ENCODE measurements at regions of chr9 and their contacts with region 1.

Region 1: DNA sequence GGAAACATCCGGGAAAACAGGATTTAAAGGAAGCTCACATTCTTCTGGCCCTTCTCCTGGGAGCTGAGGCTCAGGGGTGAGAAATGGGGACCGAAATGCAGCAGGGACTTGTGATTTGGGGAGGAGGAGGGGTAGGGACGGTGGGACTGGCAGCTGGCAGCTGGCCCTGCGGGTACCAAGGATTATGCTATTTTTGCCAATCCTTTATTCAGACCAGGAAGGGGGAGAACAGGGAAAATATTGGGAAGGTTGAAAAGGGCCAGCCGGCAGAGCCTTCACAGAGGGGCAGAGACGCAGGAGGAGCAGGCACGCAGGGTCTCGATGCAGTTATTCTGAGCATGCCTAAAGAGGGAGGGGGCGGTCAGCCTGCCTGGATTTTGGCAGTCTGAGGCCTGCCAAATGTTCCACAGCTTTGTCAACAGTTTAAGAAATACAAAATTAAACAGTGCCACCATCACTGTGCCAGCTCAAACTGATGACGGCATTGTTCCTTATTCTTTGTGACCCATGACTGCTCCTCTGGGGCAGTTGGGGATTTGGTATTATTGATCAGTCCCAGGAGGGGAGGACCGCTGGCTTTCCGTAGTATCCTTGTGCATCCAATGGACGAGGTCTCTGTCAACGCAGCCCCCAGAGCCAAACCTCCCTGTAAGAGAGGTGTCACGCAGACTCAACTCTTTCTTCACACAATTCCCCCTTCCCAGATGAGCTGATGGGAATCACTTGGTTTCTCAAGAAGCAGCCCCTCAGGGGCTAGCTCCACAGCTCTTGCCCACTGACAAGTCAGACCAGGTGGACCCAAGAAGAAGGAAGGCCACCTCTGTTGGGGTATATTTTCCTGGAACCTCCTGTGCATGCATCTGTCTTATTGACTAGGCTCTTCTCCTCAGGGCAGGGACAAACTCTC is 553.3 kb downstream of the BNC2 start:
- DNase-seq: no peak
- ATAC-seq: no peak
- H3K4me3 ChIP-seq: no peak overlapping the region
- H3K27ac ChIP-seq: no peak overlapping the region
- H3K4me1 ChIP-seq: no peaks in the 10 kb centered on the region
- H3K27me3 ChIP-seq: no peaks in the 10 kb centered on the region
- CTCF ChIP-seq: no peak

Region 2: DNA sequence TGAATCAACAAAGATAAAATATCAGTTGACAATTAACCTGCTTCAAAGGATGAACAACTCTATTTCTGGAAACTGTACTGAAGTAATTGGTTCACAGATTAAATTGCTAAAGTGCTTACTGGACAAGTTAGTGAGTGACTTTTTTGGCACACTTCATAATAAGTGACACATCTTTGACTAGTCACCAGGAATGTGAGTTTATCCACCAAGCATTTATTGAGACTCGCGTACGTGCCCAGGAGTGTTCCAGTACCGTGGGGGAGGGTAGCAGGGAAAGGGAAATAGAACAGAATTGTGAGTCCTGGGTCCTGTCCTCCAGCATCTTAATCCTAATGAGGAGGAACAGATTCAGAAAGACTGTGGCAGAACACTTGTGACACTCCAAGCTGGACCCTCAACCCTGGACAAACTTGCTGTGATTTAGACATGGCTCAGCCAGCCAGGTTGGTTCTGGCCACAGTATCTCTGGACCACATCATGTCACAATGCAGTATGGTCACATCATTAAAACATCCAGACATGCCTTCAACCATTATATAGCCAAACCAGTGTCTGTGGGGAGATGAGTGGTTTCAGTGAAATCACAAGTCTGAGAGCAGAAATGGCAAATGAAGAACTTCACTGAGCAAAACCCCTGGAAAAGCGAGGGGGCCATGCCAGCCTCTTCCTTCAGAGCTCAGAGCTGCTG is 69.8 kb before region 1 on chr9:
- CTCF ChIA-PET with region 1: no interaction called
- POLR2A ChIA-PET with region 1: no interaction called
- in situ Hi-C with region 1: no loop called
- intact Hi-C with region 1: no loop called
- DNase-seq: no peak
- ATAC-seq: no peak
- H3K4me3 ChIP-seq: no peak overlapping the region
- H3K27ac ChIP-seq: no peak overlapping the region
- H3K4me1 ChIP-seq: no peaks in the 10 kb centered on the region
- H3K27me3 ChIP-seq: no peaks in the 10 kb centered on the region
- CTCF ChIP-seq: no peak

Region 3: GRCh38 chr9:16615451-16615850 is 298.3 kb after region 1 on chr9:
- CTCF ChIA-PET with region 1: no interaction called
- POLR2A ChIA-PET with region 1: interaction called, 10 read pairs
- in situ Hi-C with region 1: no loop called
- intact Hi-C with region 1: no loop called
- DNase-seq: no peak
- ATAC-seq: no peak
- H3K4me3 ChIP-seq: no peak overlapping the region
- H3K27ac ChIP-seq: no peak overlapping the region
- H3K4me1 ChIP-seq: no peaks in the 10 kb centered on the region
- H3K27me3 ChIP-seq: no peaks in the 10 kb centered on the region
- CTCF ChIP-seq: no peak

Measured in Panc1 (cell line).